ENCODE measurements at regions of chr21 and their contacts with region 1.

Region 1: DNA sequence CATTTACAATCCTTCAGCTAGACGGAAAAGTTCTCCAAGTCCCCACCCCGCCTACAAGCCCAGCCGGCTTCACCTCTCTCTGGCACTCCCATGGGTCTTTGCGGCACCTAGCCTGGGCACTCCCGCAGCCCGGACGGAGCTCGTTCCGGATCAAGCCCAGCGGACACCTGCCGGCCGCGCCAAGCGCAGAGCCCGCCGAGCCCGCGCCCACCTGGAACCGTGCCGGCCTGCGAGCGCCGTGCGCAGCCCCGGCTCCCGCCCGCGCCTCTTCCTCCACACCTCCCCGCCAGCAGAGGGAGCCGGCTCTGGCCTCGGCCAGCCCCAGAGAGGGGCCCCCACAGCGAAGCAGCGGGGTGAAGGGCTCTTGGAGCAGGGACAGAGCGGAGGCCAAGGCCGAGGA is 50.0 kb upstream of the KRTAP19-8 start:
- DNase-seq: no peak
- ATAC-seq: no peak
- H3K4me3 ChIP-seq: no peak overlapping the region
- H3K4me3 Mint-ChIP-seq: no peak overlapping the region
- H3K27ac ChIP-seq: no peak overlapping the region
- H3K27ac Mint-ChIP-seq: no peak overlapping the region
- H3K4me1 ChIP-seq: no peaks in the 10 kb centered on the region
- H3K4me1 Mint-ChIP-seq: peaks cover 3% of the 10 kb centered on the region
- H3K27me3 ChIP-seq: no peaks in the 10 kb centered on the region
- H3K27me3 Mint-ChIP-seq: peaks cover 3% of the 10 kb centered on the region
- CTCF ChIP-seq: no peak

Region 2: DNA sequence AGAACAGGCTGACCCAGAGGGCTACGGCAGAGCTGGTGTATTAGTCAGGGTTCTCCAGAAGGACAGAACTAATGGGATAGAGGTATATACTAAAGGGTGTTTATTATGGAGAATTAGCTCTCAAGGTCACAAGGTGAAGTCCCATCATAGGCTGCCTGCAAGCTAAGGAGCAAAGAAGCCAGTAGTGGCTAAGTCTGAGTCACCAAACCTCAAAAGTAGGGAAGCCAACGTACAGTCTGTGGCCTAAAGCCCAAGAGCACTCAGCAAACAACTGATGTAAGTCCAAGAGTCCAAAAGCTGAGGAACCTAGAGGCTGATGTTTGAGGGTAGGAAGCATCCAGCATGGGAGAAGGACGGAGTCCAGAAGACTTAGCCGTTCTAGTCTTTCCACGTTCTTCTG is 1610.4 kb before region 1 on chr21:
- CTCF ChIA-PET with region 1: no interaction called
- POLR2A ChIA-PET with region 1: no interaction called
- intact Hi-C with region 1: loop called (anchors 10 kb)
- DNase-seq: no peak
- ATAC-seq: no peak
- H3K4me3 ChIP-seq: no peak overlapping the region
- H3K4me3 Mint-ChIP-seq: no peak overlapping the region
- H3K27ac ChIP-seq: no peak overlapping the region
- H3K27ac Mint-ChIP-seq: no peak overlapping the region
- H3K4me1 ChIP-seq: peaks cover 0 to 5% of the 10 kb centered on the region in 2 donors
- H3K4me1 Mint-ChIP-seq: peaks cover 8% of the 10 kb centered on the region
- H3K27me3 ChIP-seq: no peaks in the 10 kb centered on the region
- H3K27me3 Mint-ChIP-seq: no peaks in the 10 kb centered on the region
- CTCF ChIP-seq: no peak

Region 3: GRCh38 chr21:30044445-30045064 is 1043.8 kb before region 1 on chr21:
- CTCF ChIA-PET with region 1: interaction called, 13 read pairs
- POLR2A ChIA-PET with region 1: no interaction called
- intact Hi-C with region 1: no loop called
- DNase-seq: peak; percentile 8
- ATAC-seq: no peak
- H3K4me3 ChIP-seq: no peak overlapping the region
- H3K4me3 Mint-ChIP-seq: no peak overlapping the region
- H3K27ac ChIP-seq: no peak overlapping the region
- H3K27ac Mint-ChIP-seq: no peak overlapping the region
- H3K4me1 ChIP-seq: no peaks in the 10 kb centered on the region
- H3K4me1 Mint-ChIP-seq: no peaks in the 10 kb centered on the region
- H3K27me3 ChIP-seq: no peaks in the 10 kb centered on the region
- H3K27me3 Mint-ChIP-seq: no peaks in the 10 kb centered on the region
- CTCF ChIP-seq: peak; percentile 94

Region 4: GRCh38 chr21:30831194-30831765 is 257.0 kb before region 1 on chr21:
- CTCF ChIA-PET with region 1: no interaction called
- POLR2A ChIA-PET with region 1: no interaction called
- intact Hi-C with region 1: loop called (anchors 5 kb)
- DNase-seq: no peak
- ATAC-seq: no peak
- H3K4me3 ChIP-seq: no peak overlapping the region
- H3K4me3 Mint-ChIP-seq: no peak overlapping the region
- H3K27ac ChIP-seq: no peak overlapping the region
- H3K27ac Mint-ChIP-seq: no peak overlapping the region
- H3K4me1 ChIP-seq: no peaks in the 10 kb centered on the region
- H3K4me1 Mint-ChIP-seq: no peaks in the 10 kb centered on the region
- H3K27me3 ChIP-seq: no peaks in the 10 kb centered on the region
- H3K27me3 Mint-ChIP-seq: no peaks in the 10 kb centered on the region
- CTCF ChIP-seq: peak; percentile 63

Region 5: GRCh38 chr21:32834916-32835235 is 1746.6 kb after region 1 on chr21:
- CTCF ChIA-PET with region 1: no interaction called
- POLR2A ChIA-PET with region 1: no interaction called
- intact Hi-C with region 1: no loop called
- DNase-seq: no peak
- ATAC-seq: no peak
- H3K4me3 ChIP-seq: no peak overlapping the region
- H3K4me3 Mint-ChIP-seq: no peak overlapping the region
- H3K27ac ChIP-seq: no peak overlapping the region
- H3K27ac Mint-ChIP-seq: no peak overlapping the region
- H3K4me1 ChIP-seq: no peaks in the 10 kb centered on the region
- H3K4me1 Mint-ChIP-seq: no peaks in the 10 kb centered on the region
- H3K27me3 ChIP-seq: peaks cover 0 to 11% (median 4%) of the 10 kb centered on the region in 4 experiments
- H3K27me3 Mint-ChIP-seq: peaks cover 30% of the 10 kb centered on the region
- CTCF ChIP-seq: no peak

Measured in B cell (primary cell).